PC-9 (cell line): ENCODE measurements at regions of chr19 and their contacts with region 1.

Region 1: GRCh38 chr19:17859533-17860330 is at the start of gene RPL18A:
- DNase-seq: peak; percentile 97 to 100
- H3K4me3 ChIP-seq: peak within 1 kb of the TSS; percentile 87
- H3K27ac ChIP-seq: peak within 1 kb of the TSS; percentile 79
- H3K4me1 ChIP-seq: peaks cover 31% of the 10 kb centered on the region
- H3K27me3 ChIP-seq: no peaks in the 10 kb centered on the region
- CTCF ChIP-seq: peak; percentile 81
- total RNA-seq, gene RPL18A: 1,887 and 2,038 TPM in 2 replicates

Region 2: DNA sequence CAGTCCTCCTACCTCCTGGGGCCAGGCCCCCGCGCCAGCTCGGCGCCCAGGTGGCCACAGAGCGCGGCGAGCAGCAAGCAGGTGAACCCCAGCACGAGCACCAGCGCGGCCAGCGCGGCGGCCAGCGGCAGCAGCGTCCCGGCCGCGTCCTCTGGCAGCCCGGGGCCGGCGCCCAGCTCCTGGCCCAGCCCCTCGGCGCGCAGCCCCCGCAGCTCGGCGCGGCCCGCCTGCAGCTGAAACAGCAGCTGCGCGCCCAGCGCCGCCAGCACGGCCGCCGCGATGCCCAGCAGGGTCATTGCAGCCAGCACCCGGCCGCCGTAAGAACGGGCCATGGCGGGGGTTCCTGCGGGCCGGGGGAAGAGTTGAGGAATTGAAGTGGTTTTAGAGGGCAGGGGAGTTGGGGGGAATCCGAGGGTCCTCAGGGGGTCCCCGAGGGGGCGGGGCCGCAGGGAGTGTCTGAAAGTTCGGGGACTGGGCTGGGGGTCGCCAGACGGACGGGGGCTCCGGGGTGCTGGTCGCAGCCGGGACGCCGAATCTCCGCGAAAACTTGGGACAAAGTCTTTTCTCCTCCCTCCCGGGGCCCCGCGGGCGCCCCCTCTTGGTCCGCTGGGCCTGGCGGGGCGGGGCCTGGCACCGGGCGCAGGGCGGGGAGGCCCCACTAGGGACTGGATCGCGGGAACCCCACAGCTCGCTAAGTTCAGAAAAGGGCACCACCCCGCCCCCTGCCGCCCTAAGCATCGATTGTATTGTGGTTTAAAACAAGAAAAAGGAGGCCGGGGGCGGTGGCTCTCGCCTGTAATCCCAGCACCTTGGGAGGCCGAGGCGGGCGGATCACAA is 411.4 kb before region 1 on chr19 and contains the start of gene TMEM221:
- CTCF ChIA-PET with region 1: no interaction called
- POLR2A ChIA-PET with region 1: no interaction called
- intact Hi-C with region 1: loop called (anchors 5 kb)
- DNase-seq: peak in 1 of 2 experiments; percentile 51
- H3K4me3 ChIP-seq: peak within 1 kb of the TSS; percentile 76
- H3K27ac ChIP-seq: no peak within 1 kb of the TSS
- H3K4me1 ChIP-seq: peaks cover 14% of the 10 kb centered on the region
- H3K27me3 ChIP-seq: no peaks in the 10 kb centered on the region
- CTCF ChIP-seq: peak; percentile 71
- total RNA-seq, gene TMEM221: 2.0 and 3.9 TPM in 2 replicates

Region 3: GRCh38 chr19:17511724-17512573 is 347.8 kb before region 1 on chr19:
- CTCF ChIA-PET with region 1: no interaction called
- POLR2A ChIA-PET with region 1: interaction called, 22 read pairs
- intact Hi-C with region 1: no loop called
- DNase-seq: peak; percentile 55 to 78
- H3K4me3 ChIP-seq: peak overlapping the region; percentile 88
- H3K27ac ChIP-seq: peak overlapping the region; percentile 98
- H3K4me1 ChIP-seq: peaks cover 42% of the 10 kb centered on the region
- H3K27me3 ChIP-seq: no peaks in the 10 kb centered on the region
- CTCF ChIP-seq: no peak

Region 4: GRCh38 chr19:17718947-17719711 is 140.6 kb before region 1 on chr19 and contains the start of gene MAP1S:
- CTCF ChIA-PET with region 1: no interaction called
- POLR2A ChIA-PET with region 1: no interaction called
- intact Hi-C with region 1: loop called (anchors 10 kb)
- DNase-seq: peak; percentile 52 to 58
- H3K4me3 ChIP-seq: peak within 1 kb of the TSS; percentile 93
- H3K27ac ChIP-seq: no peak within 1 kb of the TSS
- H3K4me1 ChIP-seq: peaks cover 21% of the 10 kb centered on the region
- H3K27me3 ChIP-seq: no peaks in the 10 kb centered on the region
- CTCF ChIP-seq: no peak
- total RNA-seq, gene MAP1S: 74.6 and 86.9 TPM in 2 replicates

Region 5: GRCh38 chr19:17775245-17775916 is 84.4 kb before region 1 on chr19:
- CTCF ChIA-PET with region 1: interaction called, 16 read pairs
- POLR2A ChIA-PET with region 1: no interaction called
- intact Hi-C with region 1: no loop called
- DNase-seq: peak; percentile 57 to 70
- H3K4me3 ChIP-seq: no peak overlapping the region
- H3K27ac ChIP-seq: no peak overlapping the region
- H3K4me1 ChIP-seq: peaks cover 18% of the 10 kb centered on the region
- H3K27me3 ChIP-seq: no peaks in the 10 kb centered on the region
- CTCF ChIP-seq: peak; percentile 93

Region 6: DNA sequence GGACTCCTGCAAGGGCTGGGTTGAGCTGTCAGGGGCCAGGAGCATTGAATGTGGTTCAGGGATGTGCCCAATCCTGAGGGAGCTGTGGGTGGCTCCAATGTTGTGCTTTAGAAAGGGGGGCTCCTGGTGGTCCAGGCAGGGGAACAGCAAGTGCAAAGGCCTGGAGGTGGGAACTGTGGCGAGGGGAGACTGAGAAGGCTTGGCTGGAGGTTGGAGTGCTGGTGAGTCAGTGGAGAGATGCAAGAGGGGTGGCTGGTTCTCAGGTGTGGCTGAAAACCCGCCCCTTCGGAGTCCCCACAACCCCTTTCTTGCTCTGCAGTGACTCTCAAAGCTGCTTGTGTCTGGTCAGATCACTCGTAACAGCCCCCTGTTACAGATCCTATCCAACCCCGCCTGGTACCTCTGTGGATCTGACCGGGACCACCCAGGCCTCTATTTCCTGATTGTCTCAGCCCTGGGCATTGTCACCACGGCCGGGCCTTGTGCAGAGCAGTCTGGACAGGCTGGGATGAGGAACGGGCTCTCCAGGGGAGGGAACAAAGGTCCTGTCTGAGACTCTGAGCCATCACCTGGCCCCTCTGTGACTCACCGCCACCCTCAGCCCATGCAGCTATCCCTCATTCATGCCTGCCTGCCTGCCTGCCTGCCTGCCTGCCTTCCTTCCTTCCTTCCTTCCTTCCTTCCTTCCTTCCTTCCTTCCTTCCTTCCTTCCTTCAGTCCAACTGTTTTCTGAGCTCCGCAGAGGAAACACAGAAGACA is 105.8 kb after region 1 on chr19:
- CTCF ChIA-PET with region 1: interaction called, 10 read pairs
- POLR2A ChIA-PET with region 1: no interaction called
- intact Hi-C with region 1: no loop called
- DNase-seq: no peak
- H3K4me3 ChIP-seq: no peak overlapping the region
- H3K27ac ChIP-seq: no peak overlapping the region
- H3K4me1 ChIP-seq: no peaks in the 10 kb centered on the region
- H3K27me3 ChIP-seq: peaks cover 16% of the 10 kb centered on the region; the same call in 1 of the 2 replicates
- CTCF ChIP-seq: no peak

Region 7: GRCh38 chr19:18097217-18097992 is 237.7 kb after region 1 on chr19 and contains the start of gene MAST3:
- CTCF ChIA-PET with region 1: interaction called, 12 read pairs
- POLR2A ChIA-PET with region 1: no interaction called
- intact Hi-C with region 1: no loop called
- DNase-seq: peak; percentile 76 to 94
- H3K4me3 ChIP-seq: peak within 1 kb of the TSS; percentile 59; the same call in 1 of the 2 replicates
- H3K27ac ChIP-seq: no peak within 1 kb of the TSS
- H3K4me1 ChIP-seq: peaks cover 6% of the 10 kb centered on the region; the same call in 1 of the 2 replicates
- H3K27me3 ChIP-seq: no peaks in the 10 kb centered on the region
- CTCF ChIP-seq: no peak
- total RNA-seq, gene MAST3: 14.1 and 15.8 TPM in 2 replicates